PC-9 (cell line): ENCODE measurements at regions of chr3 and their contacts with region 1.

Region 1: DNA sequence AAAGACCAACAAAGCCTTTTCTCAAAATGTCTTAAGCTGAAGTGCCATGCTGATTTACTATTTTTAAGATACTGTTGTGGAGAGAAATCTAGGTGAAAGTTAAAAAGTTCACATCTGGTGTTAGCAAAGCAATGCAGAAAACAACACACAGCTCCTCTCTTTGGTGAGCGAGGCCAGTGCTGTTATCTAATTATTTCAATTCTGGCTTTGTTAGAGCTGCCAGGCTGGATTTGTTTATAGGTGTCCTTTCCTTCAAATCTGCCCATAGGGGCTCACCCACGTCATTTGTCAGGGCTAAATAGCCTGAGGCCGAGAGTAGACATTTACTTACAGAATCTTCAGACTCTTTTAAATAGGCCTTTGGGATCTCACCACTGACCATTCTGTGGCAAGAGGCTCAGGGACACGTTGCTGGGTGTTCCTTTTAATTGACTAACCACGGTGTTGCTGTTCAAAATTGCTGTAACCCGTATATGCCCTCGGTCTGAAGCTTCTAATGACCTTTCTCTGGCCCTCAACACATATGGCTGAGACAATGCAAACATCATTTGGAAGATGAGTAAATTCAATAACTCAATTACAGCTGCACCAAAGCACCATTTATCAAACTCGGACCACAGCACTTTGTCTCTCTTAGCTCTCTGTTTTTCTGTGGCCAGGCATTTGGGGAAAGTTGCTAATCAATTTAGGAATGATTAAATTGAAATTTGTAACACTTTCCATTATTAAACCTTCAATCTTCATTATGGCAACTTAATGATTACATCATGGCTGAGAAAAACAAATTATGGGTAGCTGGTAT is 152.6 kb downstream of the PDZRN3 start:
- DNase-seq: no peak
- H3K4me3 ChIP-seq: no peak overlapping the region
- H3K27ac ChIP-seq: no peak overlapping the region
- H3K4me1 ChIP-seq: no peaks in the 10 kb centered on the region
- H3K27me3 ChIP-seq: peaks cover 4% of the 10 kb centered on the region; the same call in 1 of the 2 replicates
- CTCF ChIP-seq: no peak

Region 2: DNA sequence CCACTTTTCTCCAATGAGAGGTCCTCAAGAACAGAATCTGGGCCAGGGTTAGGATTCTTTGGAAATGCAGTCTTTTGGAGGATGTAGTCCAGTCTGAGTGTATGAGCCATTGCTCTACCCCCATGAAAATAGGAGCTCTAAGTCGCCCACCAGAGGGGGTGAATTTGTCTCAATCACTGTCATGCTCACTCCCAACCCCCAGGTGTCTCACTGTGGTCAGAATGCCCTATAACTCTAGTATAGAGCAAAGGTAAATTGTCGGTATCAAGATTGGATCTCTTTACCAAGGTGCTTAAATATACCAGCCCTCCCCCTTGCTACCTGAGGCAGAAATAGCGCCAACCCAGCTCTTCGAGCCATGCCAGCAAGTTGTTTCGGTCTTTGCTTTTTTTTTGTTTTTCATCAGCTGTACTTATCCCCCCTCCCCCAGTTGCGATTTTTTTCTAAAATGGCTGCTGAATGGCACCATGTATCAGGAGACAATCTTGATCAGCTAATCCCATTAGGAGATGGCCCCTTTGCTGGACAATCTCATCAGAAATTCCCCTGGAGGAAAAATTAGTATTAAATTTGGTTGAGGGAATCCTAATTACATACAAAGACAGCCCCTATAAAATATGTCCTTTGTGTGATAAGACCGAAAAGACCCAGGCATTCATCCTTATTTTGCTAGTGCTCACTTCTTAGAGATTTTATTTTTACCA is 280.0 kb before region 1 on chr3:
- CTCF ChIA-PET with region 1: interaction called, 11 read pairs
- POLR2A ChIA-PET with region 1: no interaction called
- intact Hi-C with region 1: no loop called
- DNase-seq: no peak
- H3K4me3 ChIP-seq: no peak overlapping the region
- H3K27ac ChIP-seq: no peak overlapping the region
- H3K4me1 ChIP-seq: no peaks in the 10 kb centered on the region
- H3K27me3 ChIP-seq: no peaks in the 10 kb centered on the region
- CTCF ChIP-seq: no peak

Region 3: GRCh38 chr3:73915886-73916285 is 443.7 kb after region 1 on chr3:
- CTCF ChIA-PET with region 1: no interaction called
- POLR2A ChIA-PET with region 1: no interaction called
- intact Hi-C with region 1: no loop called
- DNase-seq: no peak
- H3K4me3 ChIP-seq: no peak overlapping the region
- H3K27ac ChIP-seq: no peak overlapping the region
- H3K4me1 ChIP-seq: no peaks in the 10 kb centered on the region
- H3K27me3 ChIP-seq: no peaks in the 10 kb centered on the region
- CTCF ChIP-seq: no peak